ENCODE measurements at regions of chr11 and their contacts with region 1.

Region 1: GRCh38 chr11:45771566-45772448 is 33.1 kb upstream of the SLC35C1 start:
- DNase-seq: peak; percentile 55 to 88 (median 81)
- ATAC-seq: peak; percentile 84
- H3K4me3 ChIP-seq: peak overlapping the region; percentile 51 to 81
- H3K4me3 Mint-ChIP-seq: peak overlapping the region; percentile 91
- H3K27ac ChIP-seq: peak overlapping the region in 1 of 2 experiments; percentile 75
- H3K27ac Mint-ChIP-seq: peak overlapping the region; percentile 74
- H3K4me1 ChIP-seq: peaks cover 6% of the 10 kb centered on the region
- H3K4me1 Mint-ChIP-seq: peaks cover 16% of the 10 kb centered on the region
- H3K27me3 ChIP-seq: no peaks in the 10 kb centered on the region
- H3K27me3 Mint-ChIP-seq: peaks cover 4% of the 10 kb centered on the region
- CTCF ChIP-seq: peak; percentile 67

Region 2: DNA sequence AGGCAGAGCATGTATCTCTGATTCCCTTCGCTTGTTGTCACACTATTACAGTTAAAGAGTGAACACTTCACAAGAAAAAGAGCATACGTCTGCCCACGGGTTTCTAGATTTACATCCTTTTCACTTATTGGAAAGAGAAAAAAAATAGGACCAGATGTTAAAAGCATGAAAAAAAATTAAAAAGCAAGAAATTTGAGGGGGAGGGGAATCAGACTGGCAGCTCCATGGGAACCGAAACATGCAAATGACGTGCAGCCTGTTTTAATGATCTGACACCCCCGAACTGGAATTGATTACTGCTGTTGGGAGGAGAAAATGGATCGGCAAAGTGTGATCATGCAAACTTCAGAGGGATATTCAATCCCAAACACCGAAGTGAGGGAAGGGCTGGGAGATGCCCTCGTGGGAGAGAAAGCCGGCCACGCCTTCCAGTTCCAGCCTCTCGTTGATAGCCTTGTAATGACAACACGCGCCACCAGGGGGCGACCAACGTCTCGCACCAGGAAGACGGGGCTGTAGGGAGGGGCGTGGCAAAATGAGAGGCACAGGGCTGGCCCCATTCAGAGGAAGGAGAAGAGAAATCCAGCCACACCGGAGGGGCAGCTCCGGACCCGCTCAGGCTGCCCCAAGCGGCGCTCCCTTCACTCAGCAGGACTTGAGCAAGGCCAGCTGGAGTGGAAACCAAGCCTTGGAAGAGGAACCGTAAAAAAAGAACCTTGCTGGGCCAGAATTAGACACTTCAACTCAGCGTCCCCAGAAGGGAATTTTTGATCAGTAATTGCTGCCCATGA is 431.9 kb before region 1 on chr11:
- CTCF ChIA-PET with region 1: interaction called, 3 read pairs
- POLR2A ChIA-PET with region 1: no interaction called
- intact Hi-C with region 1: loop called (anchors 1 kb)
- DNase-seq: peak; percentile 81 to 96 (median 92)
- ATAC-seq: peak; percentile 100
- H3K4me3 ChIP-seq: peak overlapping the region in 1 of 2 experiments; percentile 27
- H3K4me3 Mint-ChIP-seq: peak overlapping the region; percentile 60
- H3K27ac ChIP-seq: no peak overlapping the region
- H3K27ac Mint-ChIP-seq: no peak overlapping the region
- H3K4me1 ChIP-seq: peaks cover 8% of the 10 kb centered on the region
- H3K4me1 Mint-ChIP-seq: peaks cover 10% of the 10 kb centered on the region
- H3K27me3 ChIP-seq: peaks cover 0 to 4% of the 10 kb centered on the region in 2 experiments
- H3K27me3 Mint-ChIP-seq: peaks cover 10% of the 10 kb centered on the region
- CTCF ChIP-seq: peak; percentile 87

Region 3: DNA sequence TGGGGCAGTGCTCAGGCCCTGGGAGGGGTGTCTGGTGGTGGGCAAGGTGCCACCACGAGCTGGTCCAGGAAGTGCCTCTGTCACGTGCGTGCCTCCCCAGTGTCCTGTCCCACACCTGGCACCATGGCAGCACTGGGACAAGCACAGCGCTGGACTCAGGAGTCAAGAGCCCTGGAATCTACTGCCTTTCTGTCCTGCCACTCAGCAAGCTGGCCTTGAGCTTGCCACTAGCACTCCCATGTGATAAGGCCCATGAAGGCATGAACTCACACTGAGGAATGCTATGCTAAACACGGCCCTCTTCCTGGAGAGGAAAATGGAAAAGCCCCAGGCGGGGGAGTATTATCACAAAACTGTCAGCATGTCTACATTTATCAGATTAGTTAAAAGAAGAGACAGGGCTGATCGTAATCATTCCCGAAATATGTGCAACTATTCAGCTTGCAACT is 17.5 kb before region 1 on chr11:
- CTCF ChIA-PET with region 1: interaction called, 16 read pairs
- POLR2A ChIA-PET with region 1: no interaction called
- intact Hi-C with region 1: no loop called
- DNase-seq: no peak
- ATAC-seq: no peak
- H3K4me3 ChIP-seq: no peak overlapping the region
- H3K4me3 Mint-ChIP-seq: no peak overlapping the region
- H3K27ac ChIP-seq: no peak overlapping the region
- H3K27ac Mint-ChIP-seq: no peak overlapping the region
- H3K4me1 ChIP-seq: no peaks in the 10 kb centered on the region
- H3K4me1 Mint-ChIP-seq: no peaks in the 10 kb centered on the region
- H3K27me3 ChIP-seq: no peaks in the 10 kb centered on the region
- H3K27me3 Mint-ChIP-seq: peaks cover 43% of the 10 kb centered on the region
- CTCF ChIP-seq: no peak

Region 4: GRCh38 chr11:45798793-45799441 is 27.1 kb after region 1 on chr11:
- CTCF ChIA-PET with region 1: interaction called, 26 read pairs
- POLR2A ChIA-PET with region 1: interaction called, 9 read pairs
- intact Hi-C with region 1: loop called (anchors 1 to 2 kb)
- DNase-seq: no peak
- ATAC-seq: no peak
- H3K4me3 ChIP-seq: no peak overlapping the region
- H3K4me3 Mint-ChIP-seq: no peak overlapping the region
- H3K27ac ChIP-seq: no peak overlapping the region
- H3K27ac Mint-ChIP-seq: peak overlapping the region; percentile 11
- H3K4me1 ChIP-seq: no peaks in the 10 kb centered on the region
- H3K4me1 Mint-ChIP-seq: peaks cover 5% of the 10 kb centered on the region
- H3K27me3 ChIP-seq: no peaks in the 10 kb centered on the region
- H3K27me3 Mint-ChIP-seq: no peaks in the 10 kb centered on the region
- CTCF ChIP-seq: no peak

Region 5: GRCh38 chr11:45804761-45805304 is 33.0 kb after region 1 on chr11 and contains the start of gene SLC35C1:
- CTCF ChIA-PET with region 1: interaction called, 26 read pairs
- POLR2A ChIA-PET with region 1: interaction called, 9 read pairs
- intact Hi-C with region 1: loop called (anchors 1 to 2 kb)
- DNase-seq: peak; percentile 89 to 98 (median 97)
- ATAC-seq: peak; percentile 96
- H3K4me3 ChIP-seq: peak within 1 kb of the TSS; percentile 97
- H3K4me3 Mint-ChIP-seq: peak within 1 kb of the TSS; percentile 90
- H3K27ac ChIP-seq: peak within 1 kb of the TSS; percentile 76 to 81
- H3K27ac Mint-ChIP-seq: peak within 1 kb of the TSS; percentile 81
- H3K4me1 ChIP-seq: peaks cover 32% of the 10 kb centered on the region
- H3K4me1 Mint-ChIP-seq: peaks cover 44% of the 10 kb centered on the region
- H3K27me3 ChIP-seq: no peaks in the 10 kb centered on the region
- H3K27me3 Mint-ChIP-seq: no peaks in the 10 kb centered on the region
- CTCF ChIP-seq: no peak
- total RNA-seq, gene SLC35C1: 3.1 to 3.3 TPM

Region 6: DNA sequence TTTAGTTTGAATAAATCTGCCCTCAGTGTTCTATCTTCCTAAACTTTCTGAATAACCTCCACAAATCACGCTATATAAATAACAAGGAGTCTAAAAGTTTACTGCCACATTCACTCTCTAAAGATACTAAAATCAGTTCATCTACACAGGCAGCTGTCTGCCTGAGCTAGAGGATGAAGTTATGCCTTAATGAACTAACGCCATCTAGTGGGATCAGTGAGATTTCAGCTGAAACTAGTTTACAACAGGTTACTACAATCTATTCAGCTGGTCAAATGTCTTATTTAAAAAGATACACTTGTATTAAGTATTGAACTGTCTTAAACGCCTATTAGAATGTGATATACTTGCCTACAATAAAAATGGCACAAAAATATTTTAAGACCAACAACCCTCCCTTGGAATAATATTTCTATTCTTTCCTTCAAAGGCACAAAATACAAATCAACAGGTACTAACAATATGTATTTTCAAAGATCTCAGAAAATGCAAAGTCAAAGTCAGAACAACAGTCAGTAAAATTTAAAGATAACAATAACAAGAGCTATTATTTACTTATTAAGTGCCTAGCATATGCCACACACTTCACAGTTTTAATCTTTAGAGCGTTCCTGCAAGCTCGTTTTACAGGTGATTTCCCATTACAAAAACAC is 234.7 kb after region 1 on chr11:
- CTCF ChIA-PET with region 1: interaction called, 7 read pairs
- POLR2A ChIA-PET with region 1: no interaction called
- intact Hi-C with region 1: loop called in 1 of 2 experiments (anchors 5 kb)
- DNase-seq: peak in 3 of 9 experiments; percentile 21 to 77 (median 68)
- ATAC-seq: peak; percentile 78
- H3K4me3 ChIP-seq: no peak overlapping the region
- H3K4me3 Mint-ChIP-seq: no peak overlapping the region
- H3K27ac ChIP-seq: no peak overlapping the region
- H3K27ac Mint-ChIP-seq: no peak overlapping the region
- H3K4me1 ChIP-seq: no peaks in the 10 kb centered on the region
- H3K4me1 Mint-ChIP-seq: peaks cover 2% of the 10 kb centered on the region
- H3K27me3 ChIP-seq: no peaks in the 10 kb centered on the region
- H3K27me3 Mint-ChIP-seq: no peaks in the 10 kb centered on the region
- CTCF ChIP-seq: peak; percentile 81